HepG2 (cell line): ENCODE measurements at regions of chr5 and their contacts with region 1.

Region 1: DNA sequence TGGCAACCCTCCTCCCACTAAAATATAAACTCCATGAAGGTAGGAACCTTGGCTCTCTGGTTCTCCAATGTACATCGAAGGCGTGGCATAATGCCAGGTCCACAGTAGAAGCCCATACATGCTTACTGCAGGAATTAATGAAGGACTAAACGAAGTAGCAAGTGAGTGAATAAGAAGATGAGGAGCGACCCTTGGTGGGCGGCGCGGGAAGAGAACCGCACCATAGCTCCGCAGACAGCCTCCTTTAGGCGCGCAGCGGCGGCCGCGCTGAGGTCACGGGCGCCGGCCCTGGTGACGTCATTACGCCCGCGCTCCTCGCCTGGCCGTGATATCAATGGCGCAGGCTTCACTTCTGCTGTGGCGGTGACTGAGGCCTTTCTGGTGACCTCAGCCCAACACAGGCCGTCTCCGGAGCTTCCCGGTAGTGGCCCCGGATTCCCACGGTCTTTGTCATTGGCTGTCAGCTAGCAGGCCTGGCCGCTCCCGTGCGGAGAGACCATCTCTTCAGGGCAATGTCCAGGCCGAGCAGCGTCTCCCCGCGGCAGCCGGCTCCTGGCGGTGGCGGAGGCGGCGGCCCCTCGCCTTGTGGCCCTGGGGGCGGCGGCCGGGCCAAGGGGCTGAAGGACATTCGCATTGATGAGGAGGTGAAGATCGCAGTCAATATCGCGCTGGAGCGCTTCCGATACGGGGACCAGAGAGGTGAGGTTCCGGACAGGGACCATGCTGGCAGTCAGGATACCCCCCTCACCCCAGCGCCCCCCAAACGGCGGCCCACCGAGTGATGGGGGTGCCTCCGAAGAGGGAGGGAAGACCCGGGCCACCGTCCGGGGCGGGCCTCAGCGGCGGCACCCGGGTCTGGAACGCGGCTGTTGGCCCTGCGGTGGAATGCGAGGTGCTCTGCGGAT is at the start of gene YTHDC2:
- DNase-seq: peak; percentile 77
- ATAC-seq: peak; percentile 95
- H3K4me3 ChIP-seq: peak within 1 kb of the TSS; percentile 85 to 91 (median 87)
- H3K27ac ChIP-seq: peak within 1 kb of the TSS; percentile 94
- H3K4me1 ChIP-seq: peaks cover 38% of the 10 kb centered on the region
- H3K27me3 ChIP-seq: no peaks in the 10 kb centered on the region; a peak in 1 of 5 replicates
- CTCF ChIP-seq: peak; percentile 67
- EP300 ChIP-seq: no peak
- POLR2A ChIP-seq: peak; percentile 78 to 82
- RAD21 ChIP-seq: peak; percentile 42; the same call in 1 of the 2 replicates
- total RNA-seq, gene YTHDC2: 17.8 and 21.2 TPM in 2 replicates

Region 2: GRCh38 chr5:112976432-112977309 is 537.0 kb before region 1 on chr5 and contains the start of gene DCP2:
- CTCF ChIA-PET with region 1: no interaction called
- POLR2A ChIA-PET with region 1: interaction called, 10 read pairs
- in situ Hi-C with region 1: no loop called
- intact Hi-C with region 1: no loop called
- DNase-seq: peak; percentile 99
- ATAC-seq: peak; percentile 97
- H3K4me3 ChIP-seq: peak within 1 kb of the TSS; percentile 87 to 93 (median 88)
- H3K27ac ChIP-seq: peak within 1 kb of the TSS; percentile 86
- H3K4me1 ChIP-seq: peaks cover 42% of the 10 kb centered on the region
- H3K27me3 ChIP-seq: no peaks in the 10 kb centered on the region; a peak in 1 of 5 replicates
- CTCF ChIP-seq: no peak
- EP300 ChIP-seq: 0 out of 4 replicates have a peak, but pooled peaks of 1 of the 2 experiments have one; percentile 21
- POLR2A ChIP-seq: peak; percentile 86 to 89
- RAD21 ChIP-seq: no peak
- total RNA-seq, gene DCP2: 63.4 and 113 TPM in 2 replicates

Region 3: GRCh38 chr5:113043491-113043931 is 470.1 kb before region 1 on chr5:
- CTCF ChIA-PET with region 1: no interaction called
- POLR2A ChIA-PET with region 1: no interaction called
- in situ Hi-C with region 1: loop called (anchors 25 kb)
- intact Hi-C with region 1: no loop called
- DNase-seq: peak; percentile 7
- ATAC-seq: peak; percentile 78
- H3K4me3 ChIP-seq: no peak overlapping the region
- H3K27ac ChIP-seq: no peak overlapping the region
- H3K4me1 ChIP-seq: no peaks in the 10 kb centered on the region
- H3K27me3 ChIP-seq: no peaks in the 10 kb centered on the region
- CTCF ChIP-seq: peak; percentile 77
- EP300 ChIP-seq: no peak
- POLR2A ChIP-seq: no peak
- RAD21 ChIP-seq: peak; percentile 63; the same call in 1 of the 2 replicates

Region 4: DNA sequence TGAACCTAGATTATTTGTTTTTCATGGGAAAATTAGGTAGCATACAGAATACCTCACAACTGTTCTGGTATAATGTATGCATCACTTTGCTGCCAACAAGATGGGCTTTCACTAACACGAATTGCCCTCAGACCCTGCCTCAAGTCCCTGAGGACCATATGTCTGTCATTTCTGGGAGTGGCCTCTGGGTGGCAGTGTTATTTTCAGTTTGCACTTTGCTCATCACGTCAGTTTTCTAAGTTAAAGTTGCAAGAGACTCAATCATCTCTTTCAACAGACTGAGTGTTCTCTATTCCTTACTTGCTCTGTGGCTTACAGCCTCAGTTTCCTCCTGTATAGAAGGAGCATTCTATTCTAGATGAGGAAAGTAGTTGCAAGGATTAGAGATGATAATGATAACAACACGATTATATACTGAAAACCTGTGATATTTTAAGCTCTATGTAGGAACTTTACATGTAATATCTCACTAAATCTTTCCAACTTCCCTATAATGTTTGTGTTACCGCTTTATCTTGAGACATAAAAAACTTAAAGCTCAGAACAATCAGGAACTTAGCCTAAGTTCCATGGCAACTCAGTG is 134.6 kb before region 1 on chr5:
- CTCF ChIA-PET with region 1: interaction called, 8 read pairs
- POLR2A ChIA-PET with region 1: no interaction called
- in situ Hi-C with region 1: loop called (anchors 5 kb)
- intact Hi-C with region 1: loop called (anchors 1 kb)
- DNase-seq: peak; percentile 47
- ATAC-seq: peak; percentile 77
- H3K4me3 ChIP-seq: no peak overlapping the region
- H3K27ac ChIP-seq: no peak overlapping the region
- H3K4me1 ChIP-seq: no peaks in the 10 kb centered on the region
- H3K27me3 ChIP-seq: no peaks in the 10 kb centered on the region
- CTCF ChIP-seq: peak; percentile 84
- EP300 ChIP-seq: no peak
- POLR2A ChIP-seq: no peak
- RAD21 ChIP-seq: no peak

Region 5: DNA sequence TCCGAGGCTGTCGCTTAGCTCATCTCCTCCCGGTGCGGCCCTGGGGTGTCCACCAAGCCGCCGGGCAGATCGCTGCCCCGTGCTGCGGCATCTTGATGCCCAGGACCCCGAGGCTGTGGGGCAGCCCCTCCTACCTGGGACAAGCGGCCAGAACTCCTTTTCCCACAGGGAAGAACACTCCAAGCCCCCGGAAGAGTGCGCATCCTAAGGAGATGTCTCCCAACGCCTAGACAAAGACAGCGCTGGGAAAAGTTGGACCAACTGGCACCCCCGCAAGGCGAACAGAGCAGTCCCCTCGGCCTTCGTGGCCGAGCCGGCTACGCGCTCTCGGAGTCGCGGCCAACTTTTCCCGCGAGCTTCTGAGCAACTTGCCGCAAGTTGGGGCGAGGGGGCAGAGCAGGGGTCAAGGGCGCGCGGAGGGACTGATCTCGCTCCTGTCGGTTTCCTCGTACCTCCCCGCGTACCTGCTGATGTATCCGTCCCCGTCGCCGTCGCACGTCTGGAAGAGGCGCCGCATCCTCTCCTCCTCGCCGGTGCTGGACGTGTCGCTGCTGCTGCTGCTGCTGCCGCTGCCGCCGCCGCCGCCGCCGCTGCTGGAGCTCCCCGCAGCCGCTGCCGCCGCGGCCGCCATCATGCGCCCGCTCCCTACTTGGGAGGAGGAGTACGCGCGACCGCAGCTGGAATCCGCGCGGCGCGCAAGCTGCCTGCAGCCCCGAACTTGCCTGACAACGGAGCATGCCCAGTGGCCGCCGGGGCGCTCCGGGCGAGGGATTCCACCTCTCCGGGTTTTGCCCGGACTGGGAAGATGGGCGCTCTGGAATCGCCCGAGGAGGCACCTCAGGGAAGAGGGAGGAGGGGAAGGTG is 25.6 kb before region 1 on chr5 and contains the start of gene MCC:
- CTCF ChIA-PET with region 1: no interaction called
- POLR2A ChIA-PET with region 1: interaction called, 13 read pairs
- in situ Hi-C with region 1: no loop called
- intact Hi-C with region 1: loop called (anchors 1 kb)
- DNase-seq: peak; percentile 53
- ATAC-seq: peak; percentile 95
- H3K4me3 ChIP-seq: peak within 1 kb of the TSS; percentile 51 to 76 (median 76)
- H3K27ac ChIP-seq: no peak within 1 kb of the TSS
- H3K4me1 ChIP-seq: peaks cover 17% of the 10 kb centered on the region
- H3K27me3 ChIP-seq: peaks cover 0 to 34% of the 10 kb centered on the region in 2 experiments; a peak in 4 of 5 replicates
- CTCF ChIP-seq: no peak
- EP300 ChIP-seq: no peak
- POLR2A ChIP-seq: no peak
- RAD21 ChIP-seq: no peak
- total RNA-seq, gene MCC: 2.4 and 3.0 TPM in 2 replicates